ENCODE measurements at regions of chr5 and their contacts with region 1.

Region 1: GRCh38 chr5:151239237-151239861 is 13.6 kb upstream of the GM2A start:
- DNase-seq: peak; percentile 94

Region 2: GRCh38 chr5:151126199-151126645 is 113.1 kb before region 1 on chr5:
- intact Hi-C with region 1: loop called (anchors 1 kb)
- DNase-seq: peak; percentile 92

Region 3: DNA sequence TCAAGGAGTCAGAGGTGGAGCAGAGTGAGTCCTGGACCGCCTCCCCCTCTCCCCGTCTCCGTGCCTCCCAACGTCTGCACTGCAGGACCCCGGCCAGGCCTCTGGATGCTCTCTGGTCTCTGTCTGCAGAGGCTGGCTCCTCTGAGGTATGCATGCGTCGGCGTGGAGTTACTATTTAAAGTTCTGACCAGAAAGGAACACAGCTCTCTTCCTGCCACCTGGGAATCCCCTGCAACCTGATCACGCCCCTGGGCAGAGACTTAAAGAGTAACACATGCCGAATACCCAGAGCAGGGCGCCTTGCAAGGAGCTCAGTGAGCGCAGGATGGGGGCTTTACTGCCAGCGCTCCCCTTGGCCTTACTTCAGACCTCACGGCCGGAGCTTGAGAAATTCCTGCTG is 97.8 kb before region 1 on chr5:
- intact Hi-C with region 1: loop called (anchors 5 kb)
- DNase-seq: peak; percentile 84

Region 4: DNA sequence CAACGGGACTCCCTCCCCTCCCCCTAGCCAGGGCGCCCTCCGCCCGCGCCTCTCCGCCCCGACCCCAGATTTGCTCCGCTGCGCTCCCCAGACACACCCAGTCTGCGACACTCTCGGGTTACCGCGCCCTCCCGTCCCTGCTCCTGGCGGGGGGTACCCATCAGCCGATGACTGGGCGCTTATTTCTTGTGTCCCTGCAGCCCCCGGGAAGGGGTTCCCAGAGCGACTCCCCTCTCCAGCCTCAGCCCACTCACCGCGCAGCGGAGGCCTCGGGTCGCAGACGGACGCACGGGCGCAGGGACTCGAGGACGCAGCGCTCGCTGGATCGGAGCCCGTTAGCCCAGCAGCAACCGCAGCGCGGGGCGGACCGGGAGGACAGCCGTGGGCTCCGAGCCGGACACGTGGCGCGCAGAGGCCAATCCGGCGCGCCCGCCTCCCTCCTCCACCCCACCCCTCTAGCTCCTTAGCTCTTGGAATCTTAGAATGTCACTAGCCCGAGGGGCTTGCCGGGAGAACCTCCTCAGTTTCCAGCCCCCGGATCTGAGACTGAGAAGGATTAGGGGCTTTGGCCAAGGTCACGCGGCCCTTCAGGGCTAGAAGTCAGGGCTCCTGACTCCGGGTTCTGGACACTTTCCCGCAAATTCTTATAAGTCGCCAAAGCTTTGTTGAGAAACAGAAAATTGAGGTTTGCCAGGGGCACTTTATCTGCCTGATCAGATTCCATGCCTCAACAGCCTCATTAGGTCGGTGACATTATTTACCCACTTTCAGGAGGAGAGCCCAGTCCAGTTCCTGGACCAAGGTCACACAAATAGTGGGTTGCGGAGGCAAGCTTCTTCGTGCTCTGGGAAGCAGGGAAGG is 81.7 kb before region 1 on chr5 and contains the start of gene ANXA6:
- intact Hi-C with region 1: loop called (anchors 5 kb)
- DNase-seq: peak; percentile 95
- total RNA-seq, gene ANXA6: 257 TPM

Region 5: GRCh38 chr5:151223469-151224264 is 15.7 kb before region 1 on chr5 and contains the start of gene CCDC69:
- intact Hi-C with region 1: loop called (anchors 1 kb)
- DNase-seq: peak; percentile 90
- total RNA-seq, gene CCDC69: 116 TPM

Region 6: GRCh38 chr5:151284392-151284967 is 45.1 kb after region 1 on chr5:
- intact Hi-C with region 1: no loop called
- DNase-seq: no peak

Measured in cardiac septum (tissue), 1 donor.